Lower leg skin (tissue), 4 donors: ENCODE measurements at regions of chr9 and their contacts with region 1.

Region 1: GRCh38 chr9:68457803-68458202 is 82.9 kb downstream of the TMEM252 start:
- DNase-seq: no peak
- H3K4me3 ChIP-seq: no peak overlapping the region
- CTCF ChIP-seq: no peak
- POLR2A ChIP-seq: no peak

Region 2: DNA sequence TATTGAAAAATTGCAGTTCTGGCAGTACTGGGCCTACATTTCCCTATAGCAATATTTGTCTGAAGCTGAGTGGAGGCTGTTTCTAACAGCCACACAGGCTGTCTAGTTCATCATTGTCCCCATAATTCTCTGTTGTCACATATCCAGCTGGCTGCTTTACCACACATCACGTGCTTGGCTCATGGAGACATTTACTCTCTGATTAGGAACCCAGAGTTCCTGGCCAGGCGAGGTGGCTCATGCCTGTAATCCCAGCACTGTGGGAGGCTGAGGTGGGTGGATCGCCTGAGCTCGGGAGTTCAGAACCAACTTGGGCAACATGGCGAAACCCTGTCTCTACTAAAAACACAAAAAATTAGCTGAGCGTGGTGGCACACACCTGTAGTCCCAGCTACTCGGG is 20.0 kb before region 1 on chr9:
- intact Hi-C with region 1: loop called (anchors 2 kb)
- DNase-seq: no peak
- H3K4me3 ChIP-seq: no peak overlapping the region
- CTCF ChIP-seq: no peak
- POLR2A ChIP-seq: no peak

Region 3: DNA sequence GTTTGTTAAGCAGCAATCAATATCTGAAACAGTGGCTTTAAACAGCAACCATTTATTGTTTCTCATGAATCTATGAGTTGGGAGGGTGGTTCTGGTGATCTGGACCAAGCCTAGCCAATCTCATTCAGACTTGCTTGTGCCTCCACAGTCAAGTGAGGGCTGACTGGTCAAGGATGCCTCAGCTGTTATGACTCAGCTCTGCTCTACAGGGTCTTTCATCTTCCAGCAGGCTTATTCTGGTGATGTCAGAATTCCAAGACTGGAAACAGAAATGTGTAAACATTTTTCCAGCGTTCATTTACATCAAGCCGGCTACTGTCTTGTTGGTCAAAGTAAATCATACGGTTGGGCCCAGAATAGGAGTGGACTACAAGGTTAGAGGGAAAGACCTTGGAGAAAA is 244.7 kb after region 1 on chr9:
- intact Hi-C with region 1: no loop called
- DNase-seq: no peak
- H3K4me3 ChIP-seq: no peak overlapping the region
- CTCF ChIP-seq: no peak
- POLR2A ChIP-seq: no peak

Region 4: GRCh38 chr9:69771775-69772418 is 1314.1 kb after region 1 on chr9:
- intact Hi-C with region 1: no loop called
- DNase-seq: no peak
- H3K4me3 ChIP-seq: no peak overlapping the region
- CTCF ChIP-seq: no peak
- POLR2A ChIP-seq: no peak